ENCODE measurements at regions of chrX and their contacts with region 1.

Region 1: GRCh38 chrX:139126493-139126892 is 404.0 kb upstream of the F9 start:
- DNase-seq: peak; percentile 18
- H3K4me3 ChIP-seq: no peak overlapping the region
- H3K27ac ChIP-seq: no peak overlapping the region
- H3K4me1 ChIP-seq: no peaks in the 10 kb centered on the region
- H3K27me3 ChIP-seq: no peaks in the 10 kb centered on the region
- CTCF ChIP-seq: peak; percentile 28 to 50 (median 35)
- EP300 ChIP-seq: no peak
- POLR2A ChIP-seq: no peak

Region 2: DNA sequence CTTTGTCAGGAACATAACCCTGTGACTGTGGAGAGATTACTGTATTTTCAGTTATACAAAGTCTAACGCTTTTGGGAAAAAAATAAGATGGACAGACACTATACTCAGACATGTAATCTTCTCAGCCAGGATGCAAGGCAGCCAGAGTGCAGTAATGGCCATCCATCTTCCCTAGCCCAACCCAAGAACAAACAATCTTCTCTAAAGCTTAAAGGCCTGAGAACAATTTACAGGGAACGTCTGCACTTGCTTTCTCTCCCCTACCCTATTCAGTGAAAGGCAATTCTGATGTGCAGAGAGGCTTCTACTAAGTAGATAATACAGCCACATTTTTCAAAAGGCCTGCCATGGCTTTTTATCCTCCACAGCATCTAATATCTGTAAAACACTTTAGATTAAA is 886.2 kb before region 1 on chrX:
- in situ Hi-C with region 1: no loop called
- intact Hi-C with region 1: no loop called
- DNase-seq: no peak
- H3K4me3 ChIP-seq: no peak overlapping the region
- H3K27ac ChIP-seq: no peak overlapping the region
- H3K4me1 ChIP-seq: no peaks in the 10 kb centered on the region
- H3K27me3 ChIP-seq: no peaks in the 10 kb centered on the region
- CTCF ChIP-seq: no peak
- EP300 ChIP-seq: no peak
- POLR2A ChIP-seq: no peak

Region 3: GRCh38 chrX:138847928-138848327 is 278.6 kb before region 1 on chrX:
- in situ Hi-C with region 1: no loop called
- intact Hi-C with region 1: no loop called
- DNase-seq: no peak
- H3K4me3 ChIP-seq: no peak overlapping the region
- H3K27ac ChIP-seq: no peak overlapping the region
- H3K4me1 ChIP-seq: no peaks in the 10 kb centered on the region
- H3K27me3 ChIP-seq: no peaks in the 10 kb centered on the region
- CTCF ChIP-seq: no peak
- EP300 ChIP-seq: no peak
- POLR2A ChIP-seq: no peak

Region 4: GRCh38 chrX:139007953-139008584 is 118.4 kb before region 1 on chrX:
- in situ Hi-C with region 1: no loop called
- intact Hi-C with region 1: no loop called
- DNase-seq: no peak
- H3K4me3 ChIP-seq: no peak overlapping the region
- H3K27ac ChIP-seq: no peak overlapping the region
- H3K4me1 ChIP-seq: no peaks in the 10 kb centered on the region
- H3K27me3 ChIP-seq: no peaks in the 10 kb centered on the region
- CTCF ChIP-seq: no peak
- EP300 ChIP-seq: no peak
- POLR2A ChIP-seq: no peak

Region 5: DNA sequence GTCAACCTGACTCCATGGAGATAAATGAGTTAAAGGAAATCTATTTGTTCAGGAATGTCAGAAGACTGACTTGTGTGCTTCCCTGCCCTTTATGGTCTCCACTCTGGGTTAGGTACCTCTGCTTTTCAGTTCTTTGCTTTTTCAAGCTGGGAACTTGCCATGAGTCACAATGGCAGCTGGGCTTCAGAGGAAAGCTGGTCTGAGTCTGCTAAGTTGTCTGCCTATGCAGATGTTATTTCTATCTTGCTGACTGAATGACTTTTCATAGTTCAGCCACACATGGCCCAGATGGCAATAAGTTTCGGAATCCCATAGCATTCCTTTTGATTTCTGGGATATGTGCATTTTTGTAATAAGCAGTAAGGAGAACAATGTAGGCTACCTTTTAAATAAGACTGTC is 77.0 kb before region 1 on chrX:
- in situ Hi-C with region 1: no loop called
- intact Hi-C with region 1: no loop called
- DNase-seq: no peak
- H3K4me3 ChIP-seq: no peak overlapping the region
- H3K27ac ChIP-seq: no peak overlapping the region
- H3K4me1 ChIP-seq: no peaks in the 10 kb centered on the region
- H3K27me3 ChIP-seq: no peaks in the 10 kb centered on the region
- CTCF ChIP-seq: no peak
- EP300 ChIP-seq: no peak
- POLR2A ChIP-seq: no peak

Region 6: GRCh38 chrX:139559383-139560042 is 433.0 kb after region 1 on chrX:
- in situ Hi-C with region 1: loop called in 1 of 4 experiments (anchors 25 kb)
- intact Hi-C with region 1: no loop called
- DNase-seq: peak; percentile 10
- H3K4me3 ChIP-seq: no peak overlapping the region
- H3K27ac ChIP-seq: no peak overlapping the region
- H3K4me1 ChIP-seq: no peaks in the 10 kb centered on the region
- H3K27me3 ChIP-seq: no peaks in the 10 kb centered on the region
- CTCF ChIP-seq: peak; percentile 22 to 37 (median 33)
- EP300 ChIP-seq: no peak
- POLR2A ChIP-seq: no peak

Region 7: DNA sequence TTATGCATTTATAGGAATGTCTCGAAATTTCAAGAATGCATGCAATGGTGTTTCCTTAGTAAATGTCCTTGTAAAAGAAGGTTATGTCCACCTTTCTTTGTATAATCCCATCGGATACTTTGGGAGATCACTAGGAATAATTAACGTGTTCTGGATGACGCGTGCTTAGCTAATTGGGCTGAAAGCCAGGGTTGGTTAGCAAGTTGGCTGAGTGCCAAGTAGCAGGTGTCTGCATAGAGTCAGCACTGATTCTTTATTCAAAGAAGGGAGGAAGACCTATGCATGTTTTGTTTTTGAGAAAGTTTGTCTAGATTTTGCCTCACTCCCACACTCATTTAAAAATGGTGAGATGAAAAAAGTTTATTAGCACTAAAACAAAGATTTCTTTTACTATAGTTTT is 1233.8 kb after region 1 on chrX:
- in situ Hi-C with region 1: no loop called
- intact Hi-C with region 1: loop called (anchors 5 kb)
- DNase-seq: no peak
- H3K4me3 ChIP-seq: no peak overlapping the region
- H3K27ac ChIP-seq: no peak overlapping the region
- H3K4me1 ChIP-seq: no peaks in the 10 kb centered on the region
- H3K27me3 ChIP-seq: no peaks in the 10 kb centered on the region
- CTCF ChIP-seq: no peak
- EP300 ChIP-seq: no peak
- POLR2A ChIP-seq: no peak

Measured in transverse colon (tissue), 4 donors.